ENCODE measurements at regions of chr17 and their contacts with region 1.

Region 1: GRCh38 chr17:40113110-40113906 is 8.5 kb upstream of the MSL1 start:
- DNase-seq: peak in 1 of 2 donors; percentile 99
- H3K4me3 ChIP-seq: peak overlapping the region; percentile 32 to 42
- H3K27ac ChIP-seq: peak overlapping the region; percentile 98
- H3K4me1 ChIP-seq: peaks cover 66% of the 10 kb centered on the region
- H3K27me3 ChIP-seq: no peaks in the 10 kb centered on the region
- CTCF ChIP-seq: peak; percentile 82 to 97 (median 94)
- POLR2A ChIP-seq: peak in 1 of 2 donors; percentile 22

Region 2: DNA sequence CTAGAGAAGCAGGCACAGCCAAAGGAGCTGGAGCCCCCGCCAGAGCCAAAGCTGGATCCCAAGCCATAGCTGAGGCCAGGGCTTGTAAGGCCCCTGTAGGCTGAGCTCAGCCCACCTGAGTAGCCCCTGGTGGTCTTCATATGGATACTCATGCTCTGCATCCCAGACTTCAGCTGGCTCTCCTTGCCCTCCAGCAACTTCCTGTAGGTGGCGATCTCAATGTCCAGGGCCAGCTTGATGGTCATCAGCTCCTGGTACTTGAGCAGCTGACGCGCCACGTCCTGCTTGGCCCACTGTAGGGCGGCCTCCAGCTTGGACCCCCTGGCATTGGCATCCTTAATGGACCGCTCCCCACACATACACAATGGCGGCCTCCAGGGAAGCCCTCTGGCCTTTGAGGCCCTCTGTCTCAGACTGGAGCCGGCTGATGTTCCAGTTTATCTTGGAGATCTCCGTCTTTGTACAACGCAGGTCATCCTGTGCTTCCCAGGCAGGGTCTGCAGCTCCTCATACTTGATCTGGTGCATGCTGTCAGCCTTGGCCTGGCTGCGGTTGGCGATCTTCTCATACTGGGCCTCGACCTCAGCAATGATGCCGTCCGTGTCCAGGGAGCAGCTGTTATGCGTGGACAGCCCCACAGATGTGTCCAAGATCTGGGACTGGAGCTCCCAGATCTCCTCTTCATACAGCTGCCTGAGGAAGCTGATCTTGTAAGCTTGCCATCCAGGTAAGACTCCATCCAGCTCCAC is 278.1 kb before region 1 on chr17:
- intact Hi-C with region 1: no loop called
- DNase-seq: no peak
- H3K4me3 ChIP-seq: no peak overlapping the region
- H3K27ac ChIP-seq: no peak overlapping the region
- H3K4me1 ChIP-seq: no peaks in the 10 kb centered on the region
- H3K27me3 ChIP-seq: no peaks in the 10 kb centered on the region
- CTCF ChIP-seq: no peak
- POLR2A ChIP-seq: no peak

Region 3: GRCh38 chr17:40019140-40019991 is 93.9 kb before region 1 on chr17:
- intact Hi-C with region 1: loop called (anchors 5 kb)
- DNase-seq: no peak
- H3K4me3 ChIP-seq: peak overlapping the region in 1 of 2 donors; percentile 25
- H3K27ac ChIP-seq: peak overlapping the region; percentile 89
- H3K4me1 ChIP-seq: peaks cover 100% of the 10 kb centered on the region
- H3K27me3 ChIP-seq: no peaks in the 10 kb centered on the region
- CTCF ChIP-seq: no peak
- POLR2A ChIP-seq: no peak

Region 4: DNA sequence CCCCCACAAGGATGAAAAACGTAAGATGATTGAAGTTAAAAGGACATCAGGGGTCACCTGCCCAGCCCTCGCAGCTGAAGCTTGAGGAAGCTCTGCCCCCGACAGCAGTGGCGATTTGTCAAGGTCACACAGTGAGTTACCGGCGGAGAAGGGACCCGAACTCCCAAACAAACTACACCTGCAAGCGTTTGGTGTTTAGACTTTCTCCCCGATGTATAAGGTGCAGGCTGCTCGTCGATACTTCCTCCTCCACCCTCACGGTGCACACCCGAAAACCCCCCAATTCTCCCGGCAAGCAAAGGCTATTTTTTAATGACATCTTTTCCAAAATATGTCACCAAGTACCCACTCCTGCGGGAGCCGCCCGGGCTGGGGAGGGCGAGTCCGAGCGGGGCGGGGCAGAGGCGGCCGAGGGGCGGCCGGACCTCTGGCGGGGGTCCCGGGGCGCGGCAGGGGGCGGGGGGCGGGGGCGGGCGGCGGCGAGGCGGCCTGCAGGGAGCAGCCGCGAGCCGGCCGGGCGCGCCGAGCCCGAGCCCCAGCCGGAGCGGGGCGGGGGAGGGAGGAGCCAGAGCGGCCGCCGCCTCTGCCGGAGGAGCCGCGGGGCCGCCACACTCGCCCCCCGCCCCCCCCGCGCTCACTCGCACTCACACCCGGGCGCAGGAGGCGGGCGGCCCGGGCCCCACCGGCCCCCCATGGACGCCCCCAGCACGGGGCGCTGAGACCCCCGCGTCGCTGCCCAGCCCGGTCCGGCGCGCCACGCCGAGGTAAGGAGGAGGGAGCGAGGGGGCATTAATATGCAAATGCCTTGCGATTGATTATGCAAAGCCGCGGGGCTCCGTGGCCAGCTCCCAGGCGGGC is 50.8 kb before region 1 on chr17 and contains the start of gene THRA:
- intact Hi-C with region 1: loop called (anchors 2 kb)
- DNase-seq: no peak
- H3K4me3 ChIP-seq: peak within 1 kb of the TSS; percentile 98 to 100
- H3K27ac ChIP-seq: peak within 1 kb of the TSS; percentile 99
- H3K4me1 ChIP-seq: peaks cover 58% of the 10 kb centered on the region
- H3K27me3 ChIP-seq: no peaks in the 10 kb centered on the region
- CTCF ChIP-seq: no peak
- POLR2A ChIP-seq: peak in 1 of 2 donors; percentile 47
- total RNA-seq, gene THRA: 40.3 TPM

Region 5: GRCh38 chr17:40168262-40168832 is 55.0 kb after region 1 on chr17:
- intact Hi-C with region 1: loop called (anchors 2 kb)
- DNase-seq: no peak
- H3K4me3 ChIP-seq: no peak overlapping the region
- H3K27ac ChIP-seq: peak overlapping the region; percentile 60
- H3K4me1 ChIP-seq: no peaks in the 10 kb centered on the region
- H3K27me3 ChIP-seq: no peaks in the 10 kb centered on the region
- CTCF ChIP-seq: peak; percentile 54 to 91 (median 77)
- POLR2A ChIP-seq: no peak

Region 6: GRCh38 chr17:40209404-40210093 is 96.2 kb after region 1 on chr17:
- intact Hi-C with region 1: no loop called
- DNase-seq: no peak
- H3K4me3 ChIP-seq: no peak overlapping the region
- H3K27ac ChIP-seq: no peak overlapping the region
- H3K4me1 ChIP-seq: no peaks in the 10 kb centered on the region
- H3K27me3 ChIP-seq: no peaks in the 10 kb centered on the region
- CTCF ChIP-seq: no peak
- POLR2A ChIP-seq: no peak

Measured in vagina (tissue), 2 donors.